Adrenal gland (tissue), 19 donors: ENCODE measurements at regions of chr6 and their contacts with region 1.

Region 1: GRCh38 chr6:149316798-149317655 is 485 bp upstream of the TAB2 start:
- DNase-seq: peak; percentile 89 to 96 (median 92)
- H3K4me3 ChIP-seq: peak overlapping the region; percentile 62 to 98 (median 90)
- H3K27ac ChIP-seq: peak overlapping the region; percentile 70 to 99 (median 95)
- H3K4me1 ChIP-seq: peaks cover 12 to 33% of the 10 kb centered on the region in 2 donors
- H3K27me3 ChIP-seq: no peaks in the 10 kb centered on the region
- CTCF ChIP-seq: peak in 2 of 6 experiments; percentile 10 to 35
- POLR2A ChIP-seq: peak; percentile 81 to 82

Region 2: GRCh38 chr6:149082286-149082707 is 234.7 kb before region 1 on chr6:
- intact Hi-C with region 1: loop called in 1 of 2 experiments (anchors 10 kb)
- DNase-seq: peak; percentile 76 to 95 (median 86)
- H3K4me3 ChIP-seq: no peak overlapping the region
- H3K27ac ChIP-seq: no peak overlapping the region
- H3K4me1 ChIP-seq: peaks cover 0 to 16% of the 10 kb centered on the region in 2 donors
- H3K27me3 ChIP-seq: no peaks in the 10 kb centered on the region
- CTCF ChIP-seq: peak; percentile 68 to 91 (median 86)
- POLR2A ChIP-seq: no peak